ENCODE measurements at regions of chr4 and their contacts with region 1.

Region 1: DNA sequence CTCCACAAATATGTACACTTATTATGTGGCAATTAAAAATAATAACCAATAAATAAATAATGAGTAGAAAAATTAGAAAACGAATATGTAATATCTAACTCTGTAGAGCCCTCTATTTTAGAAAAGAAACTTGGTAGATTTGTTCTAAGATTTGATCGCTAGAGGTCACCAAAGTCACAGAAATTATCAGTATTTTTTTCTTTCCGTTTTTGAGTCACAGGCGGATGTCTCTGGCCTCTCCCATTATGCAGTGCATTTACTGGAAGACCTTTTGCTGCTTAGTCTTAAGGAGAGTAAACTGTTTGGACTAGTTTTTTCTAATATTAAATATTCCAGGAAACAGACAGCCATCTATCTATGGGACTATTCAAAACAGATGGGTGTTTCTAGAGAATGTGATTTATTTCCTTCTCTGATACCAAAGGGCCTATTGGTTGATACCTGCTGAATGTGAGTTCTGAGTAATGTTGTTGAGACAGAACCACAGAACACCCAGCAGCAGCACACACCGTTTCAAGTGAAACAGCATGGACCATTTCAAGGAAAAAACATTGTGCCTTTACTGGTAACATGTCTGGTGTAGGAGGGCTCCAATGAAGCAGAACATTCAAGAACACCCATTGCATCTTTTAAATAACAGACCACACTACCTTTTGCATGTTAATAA is 34.0 kb upstream of the GYPA start:
- DNase-seq: no peak
- ATAC-seq: peak in 1 of 2 donors; percentile 65

Region 2: DNA sequence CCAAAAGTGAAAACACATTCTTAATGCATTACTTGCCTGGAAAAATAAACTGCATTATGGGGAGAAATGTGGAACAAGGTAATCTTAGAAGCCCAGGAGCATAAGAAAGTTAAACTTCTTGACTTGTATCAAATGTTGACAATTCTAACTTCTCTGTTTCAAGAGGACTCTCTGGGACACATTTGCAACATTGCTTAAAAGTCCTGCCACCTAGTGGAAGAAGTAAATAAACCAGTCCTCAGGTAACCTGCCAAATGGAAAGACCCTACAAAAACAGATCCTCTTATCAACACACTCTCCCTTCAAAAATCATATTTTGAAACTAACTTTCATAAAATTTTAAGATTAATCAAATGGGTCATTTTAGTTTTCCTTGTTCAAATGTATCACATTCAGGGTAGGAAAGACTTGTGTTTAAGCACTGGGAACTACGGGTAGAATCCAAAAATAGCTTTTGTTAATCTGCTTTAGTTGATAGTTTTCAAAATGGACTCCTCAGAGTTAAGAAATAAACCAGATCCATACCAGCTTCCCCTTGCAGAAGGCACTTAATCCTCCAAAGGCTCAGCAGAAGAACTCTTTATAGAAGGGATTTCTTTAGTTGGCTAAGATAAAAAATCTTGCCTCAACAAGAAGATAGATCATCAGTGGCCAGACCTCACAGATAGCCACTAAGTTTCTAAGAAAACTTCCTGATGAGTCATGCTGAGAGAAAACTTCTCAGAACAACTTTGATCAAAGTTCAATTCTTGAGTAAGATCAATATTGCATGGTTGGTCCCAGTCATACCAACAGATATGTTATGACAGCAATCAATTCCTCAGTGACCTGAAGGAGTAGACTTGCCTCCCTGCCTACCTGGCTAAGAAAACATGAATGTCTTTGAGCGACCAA is 613.1 kb after region 1 on chr4:
- intact Hi-C with region 1: loop called in 1 of 2 experiments (anchors 10 kb)
- DNase-seq: no peak
- ATAC-seq: no peak

Region 3: GRCh38 chr4:145061318-145061920 is 886.9 kb after region 1 on chr4:
- intact Hi-C with region 1: loop called (anchors 10 kb)
- DNase-seq: no peak
- ATAC-seq: peak; percentile 30 to 55